ENCODE measurements at regions of chr7 and their contacts with region 1.

Region 1: GRCh38 chr7:7944619-7945282 is 23.8 kb upstream of the GLCCI1 start:
- DNase-seq: peak; percentile 48
- ATAC-seq: peak; percentile 92
- H3K4me3 Mint-ChIP-seq: peak overlapping the region; percentile 69
- H3K27ac Mint-ChIP-seq: peak overlapping the region; percentile 79
- H3K4me1 Mint-ChIP-seq: peaks cover 28% of the 10 kb centered on the region
- H3K27me3 Mint-ChIP-seq: no peaks in the 10 kb centered on the region
- CTCF ChIP-seq: no peak

Region 2: GRCh38 chr7:7816084-7816483 is 128.7 kb before region 1 on chr7:
- CTCF ChIA-PET with region 1: no interaction called
- POLR2A ChIA-PET with region 1: no interaction called
- intact Hi-C with region 1: loop called (anchors 1 kb)
- DNase-seq: no peak
- ATAC-seq: peak; percentile 56
- H3K4me3 Mint-ChIP-seq: peak overlapping the region; percentile 67
- H3K27ac Mint-ChIP-seq: peak overlapping the region; percentile 82
- H3K4me1 Mint-ChIP-seq: peaks cover 71% of the 10 kb centered on the region
- H3K27me3 Mint-ChIP-seq: no peaks in the 10 kb centered on the region
- CTCF ChIP-seq: no peak

Region 3: DNA sequence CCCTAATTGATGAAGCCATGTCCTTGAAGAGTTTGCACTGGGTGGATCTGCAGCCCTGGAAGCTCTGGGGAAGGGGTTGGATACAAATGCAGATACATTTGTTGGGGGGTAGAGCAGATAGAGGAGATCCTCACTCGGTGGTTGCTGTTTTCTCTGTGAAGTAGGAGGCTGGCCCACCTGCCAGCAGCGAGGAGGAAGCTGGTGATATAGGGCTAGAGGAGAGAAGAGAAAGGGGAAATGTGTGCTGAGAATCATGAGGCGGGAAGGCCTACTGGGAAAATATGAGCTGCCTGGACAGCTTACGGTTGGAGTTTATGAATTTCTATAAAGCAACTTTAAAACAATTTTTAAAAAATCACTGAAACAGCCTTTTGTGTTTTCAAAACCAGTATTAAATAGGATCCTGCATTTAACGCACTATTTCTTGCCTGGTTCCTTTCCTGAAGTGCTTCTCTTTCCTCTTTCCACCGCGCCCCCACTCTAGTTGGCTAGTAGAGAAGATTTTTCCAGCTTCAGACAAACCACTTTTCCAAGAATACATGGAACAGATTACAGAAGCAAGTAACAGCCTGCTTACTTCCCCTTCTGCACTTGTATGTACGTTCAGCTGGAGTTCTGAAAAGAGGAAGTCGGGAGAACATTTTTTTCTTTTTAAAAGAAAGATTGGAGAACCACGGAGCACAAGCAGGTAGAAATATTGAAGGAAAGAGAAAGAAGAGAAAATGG is 76.7 kb before region 1 on chr7:
- CTCF ChIA-PET with region 1: no interaction called
- POLR2A ChIA-PET with region 1: no interaction called
- intact Hi-C with region 1: loop called (anchors 2 kb)
- DNase-seq: no peak
- ATAC-seq: peak; percentile 72
- H3K4me3 Mint-ChIP-seq: no peak overlapping the region
- H3K27ac Mint-ChIP-seq: no peak overlapping the region
- H3K4me1 Mint-ChIP-seq: peaks cover 4% of the 10 kb centered on the region
- H3K27me3 Mint-ChIP-seq: no peaks in the 10 kb centered on the region
- CTCF ChIP-seq: no peak

Region 4: GRCh38 chr7:8190119-8190895 is 245.6 kb after region 1 on chr7:
- CTCF ChIA-PET with region 1: interaction called, 5 read pairs
- POLR2A ChIA-PET with region 1: interaction called, 5 read pairs
- intact Hi-C with region 1: loop called (anchors 1 kb)
- DNase-seq: no peak
- ATAC-seq: peak; percentile 87
- H3K4me3 Mint-ChIP-seq: no peak overlapping the region
- H3K27ac Mint-ChIP-seq: no peak overlapping the region
- H3K4me1 Mint-ChIP-seq: peaks cover 20% of the 10 kb centered on the region
- H3K27me3 Mint-ChIP-seq: no peaks in the 10 kb centered on the region
- CTCF ChIP-seq: no peak

Measured in activated B cell treated with CpG ODN at 0.5 μM for 24 hours (primary cell).